IMR-90 (cell line): ENCODE measurements at regions of chr1 and their contacts with region 1.

Region 1: DNA sequence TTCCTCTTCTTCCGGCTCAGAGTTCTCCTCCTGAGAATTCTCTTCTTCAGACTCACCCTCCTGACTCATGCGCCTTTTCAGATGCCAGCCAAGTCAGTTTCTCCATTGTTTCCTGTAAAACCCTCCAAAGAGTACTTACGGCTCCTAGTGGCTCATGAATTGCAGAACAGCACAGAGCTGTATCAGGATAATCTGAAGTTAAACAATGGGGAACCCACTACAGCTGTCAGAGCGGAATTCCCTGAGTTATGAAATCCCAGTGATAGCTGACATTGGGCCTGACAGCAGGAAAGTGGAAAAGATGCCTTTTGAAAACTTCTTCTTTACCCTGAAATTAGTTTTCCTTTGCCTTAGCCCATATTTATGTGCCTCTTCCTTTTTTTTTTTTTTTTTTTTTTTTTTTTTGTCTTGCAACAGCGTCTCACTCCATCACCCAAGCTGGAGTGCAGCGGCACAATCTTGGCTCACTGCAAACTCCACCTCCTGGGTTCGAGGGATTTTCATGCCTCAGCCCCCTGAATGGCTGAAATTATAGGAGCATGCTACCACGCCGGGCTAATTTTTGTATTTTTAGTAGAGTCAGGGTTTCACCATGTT is 38.6 kb downstream of the MSTO1 start:
- DNase-seq: peak; percentile 94
- ATAC-seq: peak; percentile 92
- H3K4me3 ChIP-seq: peak overlapping the region; percentile 32; the same call in 1 of the 2 replicates
- H3K27ac ChIP-seq: peak overlapping the region; percentile 69; the same call in 1 of the 2 replicates
- H3K4me1 ChIP-seq: peaks cover 8% of the 10 kb centered on the region
- H3K27me3 ChIP-seq: no peaks in the 10 kb centered on the region
- CTCF ChIP-seq: peak; percentile 83
- POLR2A ChIP-seq: 0 out of 2 replicates have a peak, but pooled peaks have one; percentile 18
- RAD21 ChIP-seq: peak; percentile 81

Region 2: GRCh38 chr1:155250633-155251449 is 397.8 kb before region 1 on chr1:
- CTCF ChIA-PET with region 1: interaction called, 6 read pairs
- POLR2A ChIA-PET with region 1: no interaction called
- dilution Hi-C with region 1: no loop called
- in situ Hi-C with region 1: no loop called
- intact Hi-C with region 1: loop called (anchors 1 kb)
- DNase-seq: peak; percentile 85
- ATAC-seq: peak; percentile 78
- H3K4me3 ChIP-seq: no peak overlapping the region
- H3K27ac ChIP-seq: peak overlapping the region; percentile 12; the same call in 1 of the 2 replicates
- H3K4me1 ChIP-seq: peaks cover 15% of the 10 kb centered on the region
- H3K27me3 ChIP-seq: no peaks in the 10 kb centered on the region
- CTCF ChIP-seq: peak; percentile 100
- POLR2A ChIP-seq: peak; percentile 34; the same call in 1 of the 2 replicates
- RAD21 ChIP-seq: peak; percentile 93

Region 3: DNA sequence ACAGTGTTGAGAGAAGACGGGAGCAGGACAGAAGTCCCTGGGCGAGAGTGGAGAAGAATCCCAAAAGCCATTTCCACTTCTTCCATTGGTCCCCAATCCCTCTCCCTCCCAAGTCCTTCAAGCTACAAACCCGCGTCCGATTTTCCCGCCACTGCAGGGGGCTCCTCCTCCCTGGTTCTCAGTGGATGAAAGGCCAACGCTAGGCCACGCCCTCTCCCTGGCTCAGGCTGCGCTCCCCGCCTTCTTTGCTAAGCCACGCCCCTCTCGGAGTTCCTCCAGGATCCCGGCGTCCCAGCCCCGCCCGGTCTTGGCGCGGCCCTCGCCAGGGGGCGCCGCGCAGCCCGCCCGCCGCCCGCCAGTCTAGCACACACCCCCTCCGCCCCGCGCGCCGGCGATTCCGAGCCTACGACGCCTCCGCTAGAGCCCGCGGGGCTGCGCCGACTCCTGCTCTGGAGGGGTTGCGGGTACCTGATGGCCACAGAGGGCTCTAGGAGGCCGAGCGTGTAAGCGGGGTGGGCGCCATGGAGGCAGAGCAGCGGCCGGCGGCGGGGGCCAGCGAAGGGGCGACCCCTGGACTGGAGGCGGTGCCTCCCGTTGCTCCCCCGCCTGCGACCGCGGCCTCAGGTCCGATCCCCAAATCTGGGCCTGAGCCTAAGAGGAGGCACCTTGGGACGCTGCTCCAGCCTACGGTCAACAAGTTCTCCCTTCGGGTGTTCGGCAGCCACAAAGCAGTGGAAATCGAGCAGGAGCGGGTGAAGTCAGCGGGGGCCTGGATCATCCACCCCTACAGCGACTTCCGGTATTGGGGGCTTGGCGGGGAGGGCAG is 371.4 kb before region 1 on chr1 and contains the start of gene HCN3:
- CTCF ChIA-PET with region 1: no interaction called
- POLR2A ChIA-PET with region 1: no interaction called
- dilution Hi-C with region 1: no loop called
- in situ Hi-C with region 1: no loop called
- intact Hi-C with region 1: loop called (anchors 1 kb)
- DNase-seq: peak; percentile 93
- ATAC-seq: peak; percentile 83
- H3K4me3 ChIP-seq: peak within 1 kb of the TSS; percentile 69
- H3K27ac ChIP-seq: peak within 1 kb of the TSS; percentile 28; the same call in 1 of the 2 replicates
- H3K4me1 ChIP-seq: peaks cover 1% of the 10 kb centered on the region
- H3K27me3 ChIP-seq: no peaks in the 10 kb centered on the region
- CTCF ChIP-seq: peak; percentile 78
- POLR2A ChIP-seq: no peak
- RAD21 ChIP-seq: peak; percentile 49
- total RNA-seq, gene HCN3: 0.36 and 0.83 TPM in 2 replicates

Region 4: GRCh38 chr1:155609515-155610256 is 39.0 kb before region 1 on chr1 and contains the start of gene MSTO1:
- CTCF ChIA-PET with region 1: no interaction called
- POLR2A ChIA-PET with region 1: no interaction called
- dilution Hi-C with region 1: no loop called
- in situ Hi-C with region 1: no loop called
- intact Hi-C with region 1: loop called (anchors 5 kb)
- DNase-seq: peak; percentile 98
- ATAC-seq: peak; percentile 98
- H3K4me3 ChIP-seq: peak within 1 kb of the TSS; percentile 79
- H3K27ac ChIP-seq: peak within 1 kb of the TSS; percentile 93
- H3K4me1 ChIP-seq: no peaks in the 10 kb centered on the region
- H3K27me3 ChIP-seq: no peaks in the 10 kb centered on the region
- CTCF ChIP-seq: no peak
- POLR2A ChIP-seq: peak; percentile 66
- RAD21 ChIP-seq: no peak
- total RNA-seq, gene MSTO1: 19.2 and 21.7 TPM in 2 replicates